OCI-LY7 (cell line): ENCODE measurements at regions of chr13 and their contacts with region 1.

Region 1: GRCh38 chr13:75876360-75877050 is 240.4 kb downstream of the LMO7 start:
- DNase-seq: peak; percentile 69
- H3K4me3 ChIP-seq: no peak overlapping the region
- H3K27ac ChIP-seq: no peak overlapping the region
- H3K4me1 ChIP-seq: no peaks in the 10 kb centered on the region
- CTCF ChIP-seq: peak; percentile 93

Region 2: DNA sequence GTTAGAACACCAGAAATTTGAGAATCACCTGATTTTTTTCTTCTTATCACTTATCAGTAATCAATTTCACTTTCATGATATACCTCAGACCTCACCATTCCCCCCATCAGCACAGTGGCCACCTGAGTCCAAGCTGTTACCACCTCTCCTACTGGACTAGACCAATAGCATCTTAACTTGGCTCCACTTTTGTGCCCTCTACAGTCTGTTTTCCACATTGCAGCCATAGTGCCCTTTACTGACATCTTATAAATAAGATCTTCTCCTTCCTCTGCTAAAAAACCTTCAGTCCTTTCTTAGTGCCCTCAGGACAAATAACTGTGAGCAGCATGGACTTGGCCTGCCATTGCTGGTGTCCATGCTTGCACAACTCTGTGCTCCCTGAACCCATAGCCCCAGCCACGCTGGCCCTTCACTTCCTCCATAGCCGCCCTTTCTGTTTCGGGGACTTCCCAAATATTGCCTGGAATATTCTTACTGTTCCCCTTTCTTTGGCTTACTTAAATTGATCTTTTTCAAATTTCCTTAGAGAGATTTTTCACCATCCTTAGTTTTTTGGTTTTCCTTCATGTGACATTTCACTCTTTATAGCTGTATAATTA is 140.4 kb after region 1 on chr13:
- CTCF ChIA-PET with region 1: no interaction called
- POLR2A ChIA-PET with region 1: no interaction called
- intact Hi-C with region 1: loop called (anchors 5 kb)
- DNase-seq: peak; percentile 11
- H3K4me3 ChIP-seq: no peak overlapping the region
- H3K27ac ChIP-seq: no peak overlapping the region
- H3K4me1 ChIP-seq: no peaks in the 10 kb centered on the region
- CTCF ChIP-seq: peak; percentile 70

Region 3: DNA sequence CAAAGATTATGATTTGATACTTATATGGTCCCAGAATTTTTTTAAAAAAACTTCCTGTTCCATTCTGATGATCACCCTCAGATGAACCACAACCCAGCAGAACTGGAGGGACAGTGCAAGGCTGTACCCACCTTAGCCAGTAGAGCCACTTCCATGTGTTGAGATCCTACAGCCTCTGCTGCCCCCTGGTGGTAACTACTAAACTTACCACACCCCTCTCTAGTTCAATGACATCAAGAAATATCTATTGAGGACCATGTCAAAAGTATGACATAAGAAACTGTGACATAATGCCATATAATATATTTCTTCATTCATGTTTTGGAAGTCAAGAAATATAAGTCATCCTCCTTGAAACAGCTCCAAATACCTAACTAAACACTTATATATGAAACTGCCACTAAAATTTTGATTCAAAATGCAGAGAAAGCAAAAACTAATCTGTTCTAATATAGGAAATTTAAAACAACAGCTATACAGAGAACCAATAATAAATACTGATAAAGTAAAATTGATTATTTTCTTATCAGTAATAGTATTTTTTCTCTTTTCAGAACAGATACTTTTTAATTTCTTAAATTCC is 597.1 kb after region 1 on chr13:
- CTCF ChIA-PET with region 1: no interaction called
- POLR2A ChIA-PET with region 1: no interaction called
- intact Hi-C with region 1: loop called (anchors 1 kb)
- DNase-seq: peak; percentile 77
- H3K4me3 ChIP-seq: no peak overlapping the region
- H3K27ac ChIP-seq: no peak overlapping the region
- H3K4me1 ChIP-seq: no peaks in the 10 kb centered on the region
- CTCF ChIP-seq: peak; percentile 94

Region 4: GRCh38 chr13:76903544-76904162 is 1027.1 kb after region 1 on chr13:
- CTCF ChIA-PET with region 1: no interaction called
- POLR2A ChIA-PET with region 1: no interaction called
- intact Hi-C with region 1: loop called (anchors 5 kb)
- DNase-seq: peak; percentile 63
- H3K4me3 ChIP-seq: no peak overlapping the region
- H3K27ac ChIP-seq: no peak overlapping the region
- H3K4me1 ChIP-seq: no peaks in the 10 kb centered on the region
- CTCF ChIP-seq: peak; percentile 99